B cell (primary cell): ENCODE measurements at regions of chr5 and their contacts with region 1.

Region 1: DNA sequence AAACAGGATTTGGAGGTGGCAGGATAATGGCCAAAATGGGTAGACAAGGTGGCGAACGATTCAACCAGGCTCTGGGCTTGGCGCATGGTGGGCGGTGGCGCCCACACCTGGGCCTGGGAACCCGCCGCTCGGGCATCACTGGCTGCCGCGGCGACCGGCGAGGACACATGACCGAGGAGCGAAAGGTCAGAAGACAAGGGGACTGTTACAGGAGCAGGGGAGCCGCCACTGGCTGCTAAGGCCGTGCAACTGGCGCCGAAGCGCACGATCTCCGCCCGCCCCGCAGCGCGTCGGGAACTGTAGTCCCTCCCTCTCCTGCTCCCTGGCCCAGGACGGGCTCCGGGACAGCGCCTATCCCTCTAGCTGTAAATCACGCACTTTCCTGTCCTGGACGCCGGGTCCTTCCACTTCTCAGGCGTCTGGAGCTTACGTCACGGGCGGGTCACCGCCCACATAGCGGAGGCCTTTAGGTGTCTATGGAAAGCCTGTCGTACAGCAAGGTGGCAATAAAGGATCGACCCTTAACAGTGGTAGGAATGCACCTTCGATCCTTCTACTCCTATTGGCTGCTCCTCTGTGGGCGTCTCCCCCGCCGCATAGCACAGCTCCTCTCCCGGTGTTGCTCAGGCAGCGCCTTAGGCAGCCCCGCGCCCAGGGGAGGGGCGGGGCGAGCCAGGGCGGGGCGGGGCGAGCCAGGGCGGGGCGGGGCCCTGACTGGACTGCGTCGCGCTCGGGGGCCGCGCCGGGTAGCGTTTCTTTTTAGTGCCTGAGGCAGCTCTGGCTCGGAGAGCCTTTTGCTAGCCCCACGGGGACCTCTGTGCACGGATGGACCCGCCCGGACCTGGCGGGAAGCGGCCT is at the start of gene ICE1:
- DNase-seq: peak; percentile 99
- ATAC-seq: peak; percentile 86
- H3K4me3 ChIP-seq: peak within 1 kb of the TSS; percentile 65 to 85 (median 82)
- H3K4me3 Mint-ChIP-seq: peak within 1 kb of the TSS; percentile 96
- H3K27ac ChIP-seq: peak within 1 kb of the TSS; percentile 98 to 99
- H3K27ac Mint-ChIP-seq: peak within 1 kb of the TSS; percentile 99
- H3K4me1 ChIP-seq: peaks cover 29 to 32% of the 10 kb centered on the region in 2 donors
- H3K4me1 Mint-ChIP-seq: peaks cover 25% of the 10 kb centered on the region
- H3K27me3 ChIP-seq: no peaks in the 10 kb centered on the region
- H3K27me3 Mint-ChIP-seq: no peaks in the 10 kb centered on the region
- CTCF ChIP-seq: no peak
- total RNA-seq, gene ICE1: 39.7 and 41.0 TPM in 2 replicates

Region 2: DNA sequence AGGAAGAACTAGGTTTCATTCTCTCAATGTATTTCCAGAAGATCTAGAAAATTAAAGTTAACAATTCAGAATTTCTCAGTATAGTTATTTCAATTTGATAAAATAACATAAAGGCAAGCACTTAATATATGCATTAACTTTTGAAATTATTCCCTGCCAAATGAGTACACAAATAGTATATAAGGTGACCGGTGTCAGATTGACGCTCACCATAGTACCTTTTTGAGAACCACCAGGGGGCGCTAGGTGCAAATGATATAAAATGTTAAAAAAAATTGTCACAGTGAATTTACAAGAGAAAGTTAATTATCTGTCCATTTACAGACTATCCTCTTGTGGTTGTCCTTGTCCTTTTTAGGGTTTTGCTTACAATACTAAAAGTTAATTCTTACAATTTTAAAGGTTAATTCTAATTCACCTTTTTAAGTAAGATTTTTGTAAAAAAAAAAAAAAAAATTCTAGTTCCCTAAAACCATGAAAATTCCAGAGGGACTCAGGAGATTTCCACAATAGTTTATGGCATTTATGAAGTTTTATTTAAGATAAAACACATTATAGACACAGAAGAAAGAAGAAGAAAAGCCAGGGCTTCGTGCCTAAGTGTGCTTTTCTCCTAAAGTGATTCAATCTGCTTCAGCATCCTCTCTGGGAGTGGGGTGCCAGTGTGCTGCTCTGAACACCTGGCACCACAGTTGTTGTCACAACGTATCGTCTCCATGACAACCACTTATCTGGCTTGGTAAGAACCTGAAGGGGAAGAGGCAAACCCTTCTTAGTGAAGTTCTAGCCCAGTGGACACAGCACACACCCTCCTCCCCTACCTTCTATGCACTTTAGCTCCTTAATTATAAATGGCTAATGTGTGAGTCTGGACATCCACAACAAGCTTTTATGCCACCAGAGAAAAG is 280.3 kb before region 1 on chr5:
- CTCF ChIA-PET with region 1: interaction called, 15 read pairs
- POLR2A ChIA-PET with region 1: no interaction called
- intact Hi-C with region 1: no loop called
- DNase-seq: peak; percentile 61
- ATAC-seq: no peak
- H3K4me3 ChIP-seq: no peak overlapping the region
- H3K4me3 Mint-ChIP-seq: no peak overlapping the region
- H3K27ac ChIP-seq: no peak overlapping the region
- H3K27ac Mint-ChIP-seq: no peak overlapping the region
- H3K4me1 ChIP-seq: peaks cover 0 to 3% of the 10 kb centered on the region in 2 donors
- H3K4me1 Mint-ChIP-seq: peaks cover 3% of the 10 kb centered on the region
- H3K27me3 ChIP-seq: peaks cover 0 to 17% (median 11%) of the 10 kb centered on the region in 4 experiments
- H3K27me3 Mint-ChIP-seq: peaks cover 23% of the 10 kb centered on the region
- CTCF ChIP-seq: peak; percentile 96

Region 3: DNA sequence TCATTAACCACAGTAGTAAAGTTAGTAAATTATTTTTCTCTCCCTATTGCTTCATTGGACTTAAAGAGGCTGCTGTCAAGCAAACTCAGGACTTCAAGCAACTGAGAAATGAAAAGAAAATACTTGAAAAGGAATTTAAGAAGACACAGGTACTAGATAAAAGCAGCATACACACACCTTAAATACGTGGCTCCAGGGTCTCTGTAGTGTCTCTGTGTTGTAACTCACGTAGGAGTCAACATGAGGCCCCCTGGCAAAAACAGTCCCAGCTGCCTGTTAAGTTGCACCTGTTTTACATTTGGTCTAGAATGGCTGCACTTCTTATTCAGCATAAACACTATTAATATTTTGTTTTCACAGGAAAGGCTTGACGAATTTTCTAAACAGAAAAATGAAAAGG is 25.2 kb after region 1 on chr5:
- CTCF ChIA-PET with region 1: no interaction called
- POLR2A ChIA-PET with region 1: no interaction called
- intact Hi-C with region 1: no loop called
- DNase-seq: no peak
- ATAC-seq: no peak
- H3K4me3 ChIP-seq: no peak overlapping the region
- H3K4me3 Mint-ChIP-seq: no peak overlapping the region
- H3K27ac ChIP-seq: no peak overlapping the region
- H3K27ac Mint-ChIP-seq: no peak overlapping the region
- H3K4me1 ChIP-seq: no peaks in the 10 kb centered on the region
- H3K4me1 Mint-ChIP-seq: no peaks in the 10 kb centered on the region
- H3K27me3 ChIP-seq: no peaks in the 10 kb centered on the region
- H3K27me3 Mint-ChIP-seq: no peaks in the 10 kb centered on the region
- CTCF ChIP-seq: no peak

Region 4: DNA sequence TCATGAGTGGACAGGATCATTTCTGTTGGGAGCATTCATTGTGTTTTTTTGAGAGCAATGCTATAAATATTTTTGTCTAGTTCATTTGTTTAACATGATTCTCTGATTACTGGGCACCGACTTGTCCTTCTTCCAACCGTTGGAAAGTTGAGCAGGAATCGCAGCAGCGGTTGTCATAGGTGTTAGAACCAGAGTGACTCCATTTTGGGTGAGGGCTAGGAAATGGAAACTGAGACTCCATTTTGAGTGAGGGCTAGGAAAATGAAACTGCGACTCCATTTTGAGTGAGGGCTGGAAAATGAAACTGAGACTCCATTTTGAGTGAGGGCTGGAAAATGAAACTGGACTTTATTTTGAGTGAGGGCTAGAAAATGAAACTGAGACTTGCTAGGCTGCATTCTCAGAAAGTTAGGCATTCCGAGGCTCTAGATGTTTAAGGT is 100.9 kb after region 1 on chr5:
- CTCF ChIA-PET with region 1: no interaction called
- POLR2A ChIA-PET with region 1: no interaction called
- intact Hi-C with region 1: loop called (anchors 1 kb)
- DNase-seq: peak; percentile 79
- ATAC-seq: peak; percentile 80
- H3K4me3 ChIP-seq: peak overlapping the region in 2 of 5 experiments; percentile 36 to 40
- H3K4me3 Mint-ChIP-seq: peak overlapping the region; percentile 78
- H3K27ac ChIP-seq: no peak overlapping the region
- H3K27ac Mint-ChIP-seq: peak overlapping the region; percentile 83
- H3K4me1 ChIP-seq: peaks cover 7 to 9% of the 10 kb centered on the region in 2 donors
- H3K4me1 Mint-ChIP-seq: peaks cover 14% of the 10 kb centered on the region
- H3K27me3 ChIP-seq: peaks cover 0 to 2% (median 0%) of the 10 kb centered on the region in 4 experiments
- H3K27me3 Mint-ChIP-seq: no peaks in the 10 kb centered on the region
- CTCF ChIP-seq: no peak

Region 5: GRCh38 chr5:6659941-6660684 is 1237.9 kb after region 1 on chr5:
- CTCF ChIA-PET with region 1: no interaction called
- POLR2A ChIA-PET with region 1: no interaction called
- intact Hi-C with region 1: loop called (anchors 1 kb)
- DNase-seq: peak; percentile 80
- ATAC-seq: peak; percentile 82
- H3K4me3 ChIP-seq: peak overlapping the region in 4 of 5 experiments; percentile 35 to 62 (median 54)
- H3K4me3 Mint-ChIP-seq: peak overlapping the region; percentile 78
- H3K27ac ChIP-seq: peak overlapping the region; percentile 82 to 87
- H3K27ac Mint-ChIP-seq: peak overlapping the region; percentile 93
- H3K4me1 ChIP-seq: peaks cover 20 to 26% of the 10 kb centered on the region in 2 donors
- H3K4me1 Mint-ChIP-seq: peaks cover 30% of the 10 kb centered on the region
- H3K27me3 ChIP-seq: no peaks in the 10 kb centered on the region
- H3K27me3 Mint-ChIP-seq: no peaks in the 10 kb centered on the region
- CTCF ChIP-seq: no peak